ENCODE measurements at regions of chr11 and their contacts with region 1.

Region 1: GRCh38 chr11:76670485-76671236 is at the start of gene LRRC32:
- DNase-seq: peak; percentile 78 to 88 (median 84)
- ATAC-seq: peak; percentile 27 to 69 (median 60)
- H3K4me3 ChIP-seq: peak within 1 kb of the TSS; percentile 49 to 87 (median 76)
- H3K27ac ChIP-seq: peak within 1 kb of the TSS; percentile 78 to 95 (median 90)
- H3K4me1 ChIP-seq: peaks cover 0 to 61% (median 41%) of the 10 kb centered on the region in 12 donors
- H3K27me3 ChIP-seq: peaks cover 0 to 12% (median 0%) of the 10 kb centered on the region in 9 donors
- CTCF ChIP-seq: peak in 7 of 12 donors; percentile 8 to 32 (median 17)
- POLR2A ChIP-seq: peak in 1 of 2 donors; percentile 60
- total RNA-seq, gene LRRC32: 20.1 to 67.1 (median 26.9) TPM

Region 2: GRCh38 chr11:76444384-76445123 is 226.1 kb before region 1 on chr11 and contains the start of gene EMSY:
- intact Hi-C with region 1: loop called in 1 of 10 experiments (anchors 5 kb)
- DNase-seq: peak; percentile 97 to 98 (median 98)
- ATAC-seq: peak; percentile 96 to 98 (median 98)
- H3K4me3 ChIP-seq: peak within 1 kb of the TSS; percentile 71 to 100 (median 94)
- H3K27ac ChIP-seq: peak within 1 kb of the TSS; percentile 83 to 98 (median 92)
- H3K4me1 ChIP-seq: peaks cover 0 to 28% (median 14%) of the 10 kb centered on the region in 12 donors
- H3K27me3 ChIP-seq: no peaks in the 10 kb centered on the region
- CTCF ChIP-seq: peak in 1 of 12 donors; percentile 9
- POLR2A ChIP-seq: peak; percentile 91 to 95
- total RNA-seq, gene EMSY: 14.5 to 37.6 (median 18.6) TPM

Region 3: GRCh38 chr11:76551400-76551799 is 119.3 kb before region 1 on chr11:
- intact Hi-C with region 1: loop called in 2 of 10 experiments (anchors 5 kb)
- DNase-seq: no peak
- ATAC-seq: no peak
- H3K4me3 ChIP-seq: no peak overlapping the region
- H3K27ac ChIP-seq: no peak overlapping the region
- H3K4me1 ChIP-seq: peaks cover 0 to 8% (median 0%) of the 10 kb centered on the region in 12 donors
- H3K27me3 ChIP-seq: no peaks in the 10 kb centered on the region
- CTCF ChIP-seq: peak in 11 of 12 donors; percentile 14 to 58 (median 44)
- POLR2A ChIP-seq: no peak

Region 4: GRCh38 chr11:76598426-76598839 is 72.2 kb before region 1 on chr11:
- intact Hi-C with region 1: loop called in 1 of 10 experiments (anchors 5 kb)
- DNase-seq: peak in 1 of 5 donors; percentile 59
- ATAC-seq: peak; percentile 58 to 69 (median 61)
- H3K4me3 ChIP-seq: no peak overlapping the region
- H3K27ac ChIP-seq: peak overlapping the region in 5 of 12 donors; percentile 1 to 25 (median 6)
- H3K4me1 ChIP-seq: peaks cover 0 to 31% (median 17%) of the 10 kb centered on the region in 12 donors
- H3K27me3 ChIP-seq: no peaks in the 10 kb centered on the region
- CTCF ChIP-seq: peak; percentile 43 to 74 (median 58)
- POLR2A ChIP-seq: no peak

Region 5: GRCh38 chr11:76610871-76611475 is 59.7 kb before region 1 on chr11:
- intact Hi-C with region 1: loop called in 3 of 10 experiments (anchors 2 to 5 kb)
- DNase-seq: peak; percentile 67 to 83 (median 69)
- ATAC-seq: peak; percentile 69 to 76 (median 72)
- H3K4me3 ChIP-seq: no peak overlapping the region
- H3K27ac ChIP-seq: peak overlapping the region in 10 of 12 donors; percentile 28 to 79 (median 55)
- H3K4me1 ChIP-seq: peaks cover 3 to 58% (median 39%) of the 10 kb centered on the region in 12 donors
- H3K27me3 ChIP-seq: no peaks in the 10 kb centered on the region
- CTCF ChIP-seq: peak in 7 of 12 donors; percentile 7 to 42 (median 26)
- POLR2A ChIP-seq: no peak

Region 6: GRCh38 chr11:76637491-76638269 is 33.0 kb before region 1 on chr11:
- intact Hi-C with region 1: loop called in 4 of 10 experiments (anchors 2 to 5 kb)
- DNase-seq: peak; percentile 75 to 88 (median 80)
- ATAC-seq: peak; percentile 33 to 81 (median 66)
- H3K4me3 ChIP-seq: no peak overlapping the region
- H3K27ac ChIP-seq: peak overlapping the region; percentile 33 to 76 (median 58)
- H3K4me1 ChIP-seq: peaks cover 3 to 48% (median 25%) of the 10 kb centered on the region in 12 donors
- H3K27me3 ChIP-seq: no peaks in the 10 kb centered on the region
- CTCF ChIP-seq: no peak
- POLR2A ChIP-seq: no peak

Measured in heart left ventricle (tissue), 16 donors.